Activated CD8-positive, alpha-beta memory T cell treated with anti-CD3 and anti-CD28 coated beads, Interleukin-2, amount 10 ng/mL, durations not matched to agents 7 days and 5 days (primary cell): ENCODE measurements at regions of chr15 and their contacts with region 1.

Region 1: DNA sequence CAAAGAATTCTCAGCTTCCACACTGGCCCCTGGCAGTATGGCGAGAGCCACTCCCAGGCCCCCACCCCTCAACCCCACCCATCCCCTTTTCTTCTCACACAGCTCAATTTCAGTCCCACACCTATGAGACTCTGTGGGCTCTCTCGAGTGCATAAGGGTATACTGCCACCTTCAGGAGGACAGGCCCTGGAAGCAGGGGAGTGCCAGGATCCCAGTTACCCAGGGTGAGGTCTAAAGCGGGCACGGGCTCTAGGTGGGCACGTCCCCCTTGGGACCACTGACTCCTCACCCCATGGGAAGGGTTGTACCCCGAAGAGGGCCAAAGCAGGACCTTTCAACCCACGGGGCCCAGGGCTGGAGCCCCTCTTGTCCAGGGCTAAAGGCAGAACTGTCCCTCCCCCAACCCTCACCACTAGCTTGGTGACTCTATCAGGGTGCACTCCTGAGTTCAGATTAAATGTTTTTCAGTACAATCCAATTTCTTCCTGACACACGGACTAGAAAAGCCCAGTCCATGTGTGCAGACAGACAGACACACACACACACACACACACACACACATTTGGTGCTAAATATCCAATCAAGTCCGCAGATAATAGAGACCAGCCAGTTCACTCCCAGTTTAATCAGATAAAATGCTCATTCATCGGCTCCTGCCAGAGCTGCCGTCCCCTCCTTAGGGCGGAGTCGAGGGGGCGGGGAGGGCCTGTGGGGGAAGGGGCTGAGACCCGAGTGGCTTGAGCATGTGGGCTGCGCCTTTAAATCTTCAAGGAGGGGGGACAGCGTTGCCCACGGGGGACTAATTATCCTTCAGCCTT is 59.4 kb downstream of the CYP11A1 start:
- DNase-seq: peak; percentile 71
- ATAC-seq: peak; percentile 83
- H3K4me3 Mint-ChIP-seq: no peak overlapping the region
- H3K27ac Mint-ChIP-seq: no peak overlapping the region
- H3K4me1 Mint-ChIP-seq: peaks cover 2% of the 10 kb centered on the region
- H3K27me3 Mint-ChIP-seq: peaks cover 43% of the 10 kb centered on the region

Region 2: DNA sequence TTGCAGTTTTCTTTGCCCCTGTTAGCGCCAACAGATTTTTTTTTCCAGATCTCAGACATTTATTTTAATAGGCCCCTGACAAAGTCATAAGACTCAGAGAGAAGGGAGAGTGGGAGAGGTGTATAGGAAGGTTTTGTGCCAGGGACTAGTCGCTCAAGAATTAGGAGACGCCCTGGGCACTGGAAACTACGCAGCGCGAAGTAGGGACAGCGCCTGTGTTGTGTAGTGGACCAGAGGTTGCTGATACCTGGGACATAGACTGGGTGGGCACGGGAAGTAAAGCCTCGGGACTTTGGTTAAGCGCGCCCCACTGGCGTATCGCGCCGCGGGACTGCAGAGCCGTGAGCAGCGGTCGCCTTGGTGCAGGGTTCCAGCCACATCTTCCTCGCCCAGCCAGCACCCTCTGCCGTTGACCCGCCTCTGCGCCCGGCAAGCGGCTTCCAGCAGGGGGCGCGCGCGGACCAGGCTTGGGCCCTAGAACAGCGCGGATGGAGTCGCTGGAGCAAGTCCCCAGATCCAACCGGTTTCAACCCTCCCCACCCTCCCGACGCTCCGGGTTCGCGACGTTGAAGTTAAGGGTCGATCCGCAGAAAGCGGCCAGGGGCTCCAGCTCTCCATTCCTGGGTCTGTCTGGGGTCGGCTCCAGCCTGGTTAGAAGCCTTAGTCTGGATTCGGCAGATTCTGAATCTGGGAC is 180.6 kb before region 1 on chr15:
- CTCF ChIA-PET with region 1: interaction called, 19 read pairs
- DNase-seq: peak; percentile 89
- ATAC-seq: peak; percentile 95
- H3K4me3 Mint-ChIP-seq: no peak overlapping the region
- H3K27ac Mint-ChIP-seq: no peak overlapping the region
- H3K4me1 Mint-ChIP-seq: peaks cover 13% of the 10 kb centered on the region
- H3K27me3 Mint-ChIP-seq: peaks cover 81% of the 10 kb centered on the region

Region 3: GRCh38 chr15:74156678-74157411 is 151.2 kb before region 1 on chr15:
- CTCF ChIA-PET with region 1: interaction called, 12 read pairs
- DNase-seq: peak; percentile 65
- ATAC-seq: peak; percentile 87
- H3K4me3 Mint-ChIP-seq: no peak overlapping the region
- H3K27ac Mint-ChIP-seq: peak overlapping the region; percentile 37
- H3K4me1 Mint-ChIP-seq: peaks cover 41% of the 10 kb centered on the region
- H3K27me3 Mint-ChIP-seq: peaks cover 32% of the 10 kb centered on the region

Region 4: DNA sequence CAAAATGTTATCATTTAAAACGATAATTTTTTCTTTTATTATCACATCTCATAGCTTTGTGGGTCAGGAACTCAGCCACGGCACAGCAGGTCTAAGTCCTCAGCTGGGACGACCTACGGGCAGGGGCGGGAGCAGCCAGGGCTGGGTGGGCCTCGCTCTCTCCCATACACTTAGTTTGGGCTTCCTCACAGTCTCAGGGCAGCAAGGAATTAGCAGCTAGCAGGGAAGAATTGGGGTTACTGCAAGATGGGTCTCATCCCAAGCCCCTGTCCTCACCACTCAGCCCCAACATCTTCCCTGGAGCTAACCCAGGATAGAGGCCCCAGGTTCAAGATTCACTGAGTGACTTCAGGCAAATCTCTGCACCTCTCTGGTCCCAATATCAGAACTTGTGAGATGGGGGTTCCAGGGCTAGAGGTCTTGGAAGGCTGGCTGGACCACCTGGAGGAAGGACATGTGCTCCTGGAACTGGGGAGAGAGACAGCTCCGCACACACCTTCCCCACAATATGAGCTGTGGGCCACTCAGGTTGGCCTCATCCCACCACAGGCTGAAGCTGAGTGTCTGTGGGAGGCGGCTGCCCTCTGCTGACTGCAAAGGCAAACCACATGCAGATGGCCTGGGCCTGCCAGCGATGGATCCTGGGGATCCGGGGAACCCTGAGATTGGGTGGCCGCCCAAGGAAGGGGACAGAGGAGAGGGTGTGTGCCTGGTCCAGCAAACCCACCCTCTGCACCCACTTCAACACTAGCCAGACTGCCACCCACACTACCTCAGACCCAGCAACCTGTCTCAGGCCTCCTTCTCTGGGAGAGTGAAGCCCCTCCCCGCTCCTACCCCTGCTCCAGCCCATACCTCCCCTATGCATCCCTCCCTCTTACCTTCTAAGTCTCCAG is 14.4 kb after region 1 on chr15:
- CTCF ChIA-PET with region 1: interaction called, 132 read pairs
- DNase-seq: peak; percentile 81
- ATAC-seq: peak; percentile 89
- H3K4me3 Mint-ChIP-seq: no peak overlapping the region
- H3K27ac Mint-ChIP-seq: no peak overlapping the region
- H3K4me1 Mint-ChIP-seq: peaks cover 18% of the 10 kb centered on the region
- H3K27me3 Mint-ChIP-seq: no peaks in the 10 kb centered on the region

Region 5: GRCh38 chr15:74350295-74351290 is 42.6 kb after region 1 on chr15:
- CTCF ChIA-PET with region 1: no interaction called
- DNase-seq: no peak
- ATAC-seq: no peak
- H3K4me3 Mint-ChIP-seq: no peak overlapping the region
- H3K27ac Mint-ChIP-seq: no peak overlapping the region
- H3K4me1 Mint-ChIP-seq: no peaks in the 10 kb centered on the region
- H3K27me3 Mint-ChIP-seq: peaks cover 31% of the 10 kb centered on the region

Region 6: DNA sequence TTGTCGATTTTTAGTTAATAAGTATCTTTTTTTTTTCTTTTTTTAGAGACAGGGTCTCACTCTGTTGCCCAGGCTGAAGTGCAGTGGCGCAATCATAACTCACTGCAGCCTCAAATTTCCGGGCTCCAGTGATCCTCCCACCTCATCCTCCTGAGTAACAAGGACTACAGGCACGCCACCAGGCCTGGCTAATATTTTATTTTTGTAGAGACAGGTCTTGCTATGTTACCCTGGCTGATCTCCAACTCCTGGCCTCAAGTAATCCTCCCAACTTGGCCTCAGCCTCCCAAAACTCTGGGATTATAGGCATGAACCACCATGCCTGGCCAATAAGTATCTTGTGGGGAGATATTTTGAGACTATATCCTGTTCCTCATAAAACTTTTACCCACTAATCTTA is 203.5 kb after region 1 on chr15:
- CTCF ChIA-PET with region 1: no interaction called
- DNase-seq: no peak
- ATAC-seq: no peak
- H3K4me3 Mint-ChIP-seq: peak overlapping the region; percentile 8
- H3K27ac Mint-ChIP-seq: peak overlapping the region; percentile 50
- H3K4me1 Mint-ChIP-seq: peaks cover 19% of the 10 kb centered on the region
- H3K27me3 Mint-ChIP-seq: no peaks in the 10 kb centered on the region